MCF 10A (cell line): ENCODE measurements at regions of chr5 and their contacts with region 1.

Region 1: DNA sequence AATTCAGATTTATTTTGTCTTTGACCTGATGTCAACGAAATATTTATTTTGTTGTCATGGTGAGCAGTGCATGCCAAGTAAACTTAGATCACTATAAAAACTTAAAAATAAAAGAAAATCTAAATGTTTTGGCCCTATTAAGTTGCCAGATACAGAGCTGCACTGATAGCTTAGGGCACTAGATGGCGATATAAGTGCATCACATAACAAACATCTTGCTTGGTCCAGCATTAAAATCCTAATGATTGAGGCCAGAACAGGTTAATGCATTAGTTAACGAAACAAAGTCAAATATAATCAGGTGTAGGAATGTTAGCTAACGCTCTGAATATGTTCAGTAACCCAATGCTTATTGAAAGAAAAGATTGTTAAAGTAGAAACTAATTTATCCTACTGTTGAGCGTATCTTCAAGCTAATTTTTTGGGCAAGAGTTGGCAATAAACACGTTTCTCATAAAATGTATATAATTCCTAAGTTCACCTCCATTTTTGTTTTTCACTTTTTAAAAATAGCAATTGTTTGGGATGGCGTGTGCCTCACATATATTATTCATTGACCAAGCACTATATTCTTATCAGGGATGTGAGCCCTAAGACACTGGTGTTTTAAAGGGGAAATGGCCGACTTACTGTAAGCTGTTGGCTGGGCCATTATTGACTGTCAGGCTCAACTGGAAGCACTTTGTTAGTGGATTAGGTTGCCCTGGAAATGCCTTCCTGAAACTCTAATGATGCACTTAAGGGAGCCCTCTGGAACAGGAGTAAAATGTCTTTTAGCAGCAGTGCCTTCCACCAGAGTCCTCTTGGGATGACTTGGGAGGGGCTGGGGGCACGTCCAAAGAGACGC is 33.3 kb downstream of the KCTD16 start:
- DNase-seq: peak; percentile 83
- H3K4me3 Mint-ChIP-seq: peak overlapping the region; percentile 22
- H3K27ac Mint-ChIP-seq: no peak overlapping the region
- H3K4me1 Mint-ChIP-seq: peaks cover 15% of the 10 kb centered on the region
- H3K27me3 Mint-ChIP-seq: peaks cover 46% of the 10 kb centered on the region
- CTCF ChIP-seq: peak; percentile 92

Region 2: GRCh38 chr5:143721925-143722324 is 482.0 kb before region 1 on chr5:
- CTCF ChIA-PET with region 1: no interaction called
- POLR2A ChIA-PET with region 1: no interaction called
- intact Hi-C with region 1: no loop called
- DNase-seq: no peak
- H3K4me3 Mint-ChIP-seq: no peak overlapping the region
- H3K27ac Mint-ChIP-seq: no peak overlapping the region
- H3K4me1 Mint-ChIP-seq: peaks cover 9% of the 10 kb centered on the region
- H3K27me3 Mint-ChIP-seq: no peaks in the 10 kb centered on the region
- CTCF ChIP-seq: no peak

Region 3: GRCh38 chr5:144156767-144157171 is 47.2 kb before region 1 on chr5:
- CTCF ChIA-PET with region 1: no interaction called
- POLR2A ChIA-PET with region 1: no interaction called
- intact Hi-C with region 1: no loop called
- DNase-seq: no peak
- H3K4me3 Mint-ChIP-seq: no peak overlapping the region
- H3K27ac Mint-ChIP-seq: peak overlapping the region; percentile 44
- H3K4me1 Mint-ChIP-seq: peaks cover 5% of the 10 kb centered on the region
- H3K27me3 Mint-ChIP-seq: no peaks in the 10 kb centered on the region
- CTCF ChIP-seq: no peak

Region 4: GRCh38 chr5:144219869-144220268 is 15.9 kb after region 1 on chr5:
- CTCF ChIA-PET with region 1: interaction called, 12 read pairs
- POLR2A ChIA-PET with region 1: no interaction called
- intact Hi-C with region 1: no loop called
- DNase-seq: no peak
- H3K4me3 Mint-ChIP-seq: no peak overlapping the region
- H3K27ac Mint-ChIP-seq: no peak overlapping the region
- H3K4me1 Mint-ChIP-seq: no peaks in the 10 kb centered on the region
- H3K27me3 Mint-ChIP-seq: peaks cover under 1% of the 10 kb centered on the region
- CTCF ChIP-seq: no peak

Region 5: GRCh38 chr5:144467792-144468191 is 263.8 kb after region 1 on chr5:
- CTCF ChIA-PET with region 1: interaction called, 9 read pairs
- POLR2A ChIA-PET with region 1: no interaction called
- intact Hi-C with region 1: loop called (anchors 5 kb)
- DNase-seq: peak; percentile 78
- H3K4me3 Mint-ChIP-seq: no peak overlapping the region
- H3K27ac Mint-ChIP-seq: no peak overlapping the region
- H3K4me1 Mint-ChIP-seq: no peaks in the 10 kb centered on the region
- H3K27me3 Mint-ChIP-seq: no peaks in the 10 kb centered on the region
- CTCF ChIP-seq: peak; percentile 82

Region 6: DNA sequence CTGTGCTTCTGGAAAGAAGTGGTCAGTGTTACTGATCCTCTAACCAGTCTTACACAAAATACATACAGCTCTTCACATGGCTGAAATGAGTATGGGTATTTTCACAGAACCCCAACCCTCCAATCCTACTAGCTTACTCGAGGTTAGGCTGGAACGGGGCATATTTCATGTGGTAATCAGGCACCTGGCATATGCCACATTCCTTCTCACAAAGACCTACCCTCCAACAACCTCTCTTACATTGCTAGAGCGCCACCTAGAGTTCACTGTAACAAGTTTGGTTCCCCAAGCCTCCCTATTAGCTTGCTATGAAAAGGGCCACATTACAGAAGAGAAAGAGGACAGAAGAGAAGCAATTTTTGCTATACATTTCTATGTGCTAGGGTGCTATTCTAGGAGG is 1033.9 kb after region 1 on chr5:
- CTCF ChIA-PET with region 1: interaction called, 50 read pairs
- POLR2A ChIA-PET with region 1: no interaction called
- intact Hi-C with region 1: loop called (anchors 1 kb)
- DNase-seq: peak; percentile 90
- H3K4me3 Mint-ChIP-seq: no peak overlapping the region
- H3K27ac Mint-ChIP-seq: no peak overlapping the region
- H3K4me1 Mint-ChIP-seq: peaks cover 5% of the 10 kb centered on the region
- H3K27me3 Mint-ChIP-seq: no peaks in the 10 kb centered on the region
- CTCF ChIP-seq: peak; percentile 82

Region 7: GRCh38 chr5:145697251-145697990 is 1493.4 kb after region 1 on chr5:
- CTCF ChIA-PET with region 1: interaction called, 3 read pairs
- POLR2A ChIA-PET with region 1: no interaction called
- intact Hi-C with region 1: loop called (anchors 5 kb)
- DNase-seq: peak; percentile 75
- H3K4me3 Mint-ChIP-seq: no peak overlapping the region
- H3K27ac Mint-ChIP-seq: no peak overlapping the region
- H3K4me1 Mint-ChIP-seq: no peaks in the 10 kb centered on the region
- H3K27me3 Mint-ChIP-seq: no peaks in the 10 kb centered on the region
- CTCF ChIP-seq: peak; percentile 68

Region 8: GRCh38 chr5:146049014-146049703 is 1845.2 kb after region 1 on chr5:
- CTCF ChIA-PET with region 1: interaction called, 6 read pairs
- POLR2A ChIA-PET with region 1: no interaction called
- intact Hi-C with region 1: loop called (anchors 5 kb)
- DNase-seq: peak; percentile 91
- H3K4me3 Mint-ChIP-seq: no peak overlapping the region
- H3K27ac Mint-ChIP-seq: peak overlapping the region; percentile 4
- H3K4me1 Mint-ChIP-seq: peaks cover 31% of the 10 kb centered on the region
- H3K27me3 Mint-ChIP-seq: no peaks in the 10 kb centered on the region
- CTCF ChIP-seq: peak; percentile 90